IMR-90 (cell line): ENCODE measurements at regions of chr7 and their contacts with region 1.

Region 1: GRCh38 chr7:80134536-80135320 is at the start of gene GNAI1:
- DNase-seq: peak; percentile 74
- ATAC-seq: peak; percentile 85
- H3K4me3 ChIP-seq: peak within 1 kb of the TSS; percentile 98
- H3K27ac ChIP-seq: peak within 1 kb of the TSS; percentile 90
- H3K4me1 ChIP-seq: peaks cover 8% of the 10 kb centered on the region
- H3K27me3 ChIP-seq: no peaks in the 10 kb centered on the region
- CTCF ChIP-seq: peak; percentile 64
- POLR2A ChIP-seq: peak; percentile 66
- RAD21 ChIP-seq: peak; percentile 65
- total RNA-seq, gene GNAI1: 26.5 and 44.2 TPM in 2 replicates

Region 2: DNA sequence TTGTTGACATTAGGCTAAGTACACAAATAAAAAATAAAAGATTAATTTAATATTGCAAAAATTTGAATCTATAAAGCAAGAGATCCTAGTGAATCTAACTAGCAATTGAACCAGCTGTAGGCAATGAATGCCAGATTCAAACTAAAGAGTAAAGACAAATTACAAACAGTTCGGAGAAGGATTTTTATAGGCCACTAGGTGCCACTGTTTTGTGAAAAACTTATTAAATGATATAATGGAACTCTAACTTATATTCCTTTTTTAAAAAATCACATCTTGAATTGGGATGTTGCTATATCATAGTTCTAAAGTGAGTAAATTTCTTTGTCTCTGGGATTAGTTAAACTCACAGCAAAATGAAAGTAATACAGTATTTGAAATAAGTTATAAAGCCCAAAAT is 39.2 kb before region 1 on chr7:
- CTCF ChIA-PET with region 1: interaction called, 3 read pairs
- POLR2A ChIA-PET with region 1: no interaction called
- dilution Hi-C with region 1: no loop called
- in situ Hi-C with region 1: no loop called
- intact Hi-C with region 1: loop called (anchors 5 kb)
- DNase-seq: peak; percentile 29
- ATAC-seq: no peak; the same call in 1 of the 2 replicates
- H3K4me3 ChIP-seq: no peak overlapping the region
- H3K27ac ChIP-seq: no peak overlapping the region
- H3K4me1 ChIP-seq: no peaks in the 10 kb centered on the region; the same call in 1 of the 2 replicates
- H3K27me3 ChIP-seq: no peaks in the 10 kb centered on the region
- CTCF ChIP-seq: peak; percentile 56
- POLR2A ChIP-seq: no peak
- RAD21 ChIP-seq: peak; percentile 44

Region 3: DNA sequence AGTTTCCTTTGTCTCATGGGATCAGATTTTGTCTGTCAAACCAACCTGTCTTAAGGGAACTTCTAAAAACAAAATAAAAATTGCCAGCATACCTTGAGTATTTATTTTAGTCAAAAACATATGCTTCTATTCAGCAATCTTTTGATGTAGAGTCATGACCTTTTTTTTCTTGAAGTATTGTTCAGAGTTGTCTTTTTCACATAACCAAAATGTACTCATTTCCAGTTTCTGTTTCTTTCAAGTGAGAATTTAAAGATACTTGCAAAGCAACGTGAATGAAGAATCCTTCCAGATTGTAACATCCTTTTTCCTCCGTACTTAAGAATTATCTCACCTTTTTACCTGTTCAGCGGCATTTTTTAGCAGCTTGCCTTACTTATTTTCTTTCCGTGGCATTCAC is 37.7 kb after region 1 on chr7:
- CTCF ChIA-PET with region 1: no interaction called
- POLR2A ChIA-PET with region 1: no interaction called
- dilution Hi-C with region 1: no loop called
- in situ Hi-C with region 1: no loop called
- intact Hi-C with region 1: no loop called
- DNase-seq: no peak
- ATAC-seq: no peak
- H3K4me3 ChIP-seq: no peak overlapping the region
- H3K27ac ChIP-seq: no peak overlapping the region
- H3K4me1 ChIP-seq: no peaks in the 10 kb centered on the region
- H3K27me3 ChIP-seq: no peaks in the 10 kb centered on the region
- CTCF ChIP-seq: no peak
- POLR2A ChIP-seq: no peak
- RAD21 ChIP-seq: no peak

Region 4: GRCh38 chr7:80225361-80225760 is 90.6 kb after region 1 on chr7:
- CTCF ChIA-PET with region 1: no interaction called
- POLR2A ChIA-PET with region 1: no interaction called
- dilution Hi-C with region 1: no loop called
- in situ Hi-C with region 1: no loop called
- intact Hi-C with region 1: loop called (anchors 5 kb)
- DNase-seq: no peak
- ATAC-seq: no peak; the same call in 1 of the 2 replicates
- H3K4me3 ChIP-seq: no peak overlapping the region
- H3K27ac ChIP-seq: no peak overlapping the region
- H3K4me1 ChIP-seq: no peaks in the 10 kb centered on the region; the same call in 1 of the 2 replicates
- H3K27me3 ChIP-seq: no peaks in the 10 kb centered on the region
- CTCF ChIP-seq: no peak
- POLR2A ChIP-seq: no peak
- RAD21 ChIP-seq: no peak

Region 5: DNA sequence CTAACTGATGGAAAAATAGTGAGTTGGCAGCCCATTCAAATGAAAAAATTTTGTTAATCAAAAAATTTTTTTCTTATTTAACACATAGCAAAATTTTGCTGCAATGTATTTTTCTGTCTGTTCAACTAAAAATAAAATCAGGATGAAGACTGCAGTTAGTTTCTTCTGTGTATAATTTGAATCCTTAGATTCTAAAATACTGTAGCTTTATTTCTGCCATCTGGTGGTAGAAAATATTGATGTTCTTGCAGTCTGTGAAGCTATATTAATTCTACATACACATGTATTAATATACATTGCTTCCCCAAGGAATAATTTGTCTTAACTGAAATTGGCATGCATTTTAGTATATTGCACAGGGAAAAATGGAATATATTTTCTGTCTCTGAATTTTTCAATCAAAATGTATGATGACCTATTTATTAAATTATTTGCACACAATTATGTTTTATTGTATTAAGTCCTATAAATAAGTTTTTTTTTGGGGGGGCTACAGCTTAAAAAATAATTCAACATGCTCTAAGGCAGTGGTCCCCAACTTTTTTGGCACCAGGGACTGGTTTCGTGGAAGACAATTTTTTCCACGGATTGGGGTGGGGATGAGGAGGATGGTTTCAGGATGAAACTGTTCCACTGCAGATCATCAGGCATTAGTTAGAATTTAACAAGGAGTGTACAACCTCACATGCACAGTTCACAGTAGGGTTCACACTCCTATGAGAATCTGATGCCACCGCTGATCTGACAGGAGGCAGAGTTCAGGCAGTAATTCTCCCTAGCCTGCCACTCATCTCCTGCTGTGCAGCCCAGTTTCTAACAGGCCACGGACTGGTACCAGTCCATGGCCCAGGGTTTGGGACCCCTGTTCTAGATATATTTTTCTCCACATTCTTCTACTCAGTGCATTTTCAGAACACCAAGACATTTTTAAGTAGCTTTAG is 257.8 kb after region 1 on chr7:
- CTCF ChIA-PET with region 1: interaction called, 4 read pairs
- POLR2A ChIA-PET with region 1: no interaction called
- dilution Hi-C with region 1: no loop called
- in situ Hi-C with region 1: loop called (anchors 5 kb)
- intact Hi-C with region 1: loop called (anchors 1 kb)
- DNase-seq: peak; percentile 60
- ATAC-seq: peak; percentile 53; the same call in 1 of the 2 replicates
- H3K4me3 ChIP-seq: no peak overlapping the region
- H3K27ac ChIP-seq: no peak overlapping the region
- H3K4me1 ChIP-seq: no peaks in the 10 kb centered on the region
- H3K27me3 ChIP-seq: no peaks in the 10 kb centered on the region
- CTCF ChIP-seq: peak; percentile 59
- POLR2A ChIP-seq: no peak
- RAD21 ChIP-seq: peak; percentile 70

Region 6: DNA sequence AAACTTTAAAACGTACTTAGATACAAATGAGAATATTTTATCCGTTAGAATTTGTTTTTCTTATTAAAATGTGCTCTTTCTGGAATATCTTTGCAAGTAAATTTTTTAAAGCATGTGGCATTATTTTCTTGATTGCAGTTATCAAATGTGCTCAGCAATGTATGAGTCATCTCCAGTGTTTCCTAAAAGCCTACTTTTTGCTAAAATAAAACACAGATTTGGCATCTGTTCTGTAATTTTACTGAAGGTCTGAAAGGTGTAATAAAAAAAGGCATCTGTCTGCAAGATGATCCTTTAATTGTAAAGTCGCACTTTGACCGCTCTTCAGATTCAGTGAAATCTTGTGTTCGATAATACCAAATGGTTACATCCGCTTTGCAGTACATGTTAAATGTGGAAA is 373.7 kb after region 1 on chr7:
- CTCF ChIA-PET with region 1: no interaction called
- POLR2A ChIA-PET with region 1: no interaction called
- dilution Hi-C with region 1: no loop called
- in situ Hi-C with region 1: no loop called
- intact Hi-C with region 1: no loop called
- DNase-seq: peak; percentile 52
- ATAC-seq: no peak
- H3K4me3 ChIP-seq: no peak overlapping the region
- H3K27ac ChIP-seq: no peak overlapping the region
- H3K4me1 ChIP-seq: no peaks in the 10 kb centered on the region
- H3K27me3 ChIP-seq: no peaks in the 10 kb centered on the region
- CTCF ChIP-seq: no peak
- POLR2A ChIP-seq: no peak
- RAD21 ChIP-seq: no peak

Region 7: DNA sequence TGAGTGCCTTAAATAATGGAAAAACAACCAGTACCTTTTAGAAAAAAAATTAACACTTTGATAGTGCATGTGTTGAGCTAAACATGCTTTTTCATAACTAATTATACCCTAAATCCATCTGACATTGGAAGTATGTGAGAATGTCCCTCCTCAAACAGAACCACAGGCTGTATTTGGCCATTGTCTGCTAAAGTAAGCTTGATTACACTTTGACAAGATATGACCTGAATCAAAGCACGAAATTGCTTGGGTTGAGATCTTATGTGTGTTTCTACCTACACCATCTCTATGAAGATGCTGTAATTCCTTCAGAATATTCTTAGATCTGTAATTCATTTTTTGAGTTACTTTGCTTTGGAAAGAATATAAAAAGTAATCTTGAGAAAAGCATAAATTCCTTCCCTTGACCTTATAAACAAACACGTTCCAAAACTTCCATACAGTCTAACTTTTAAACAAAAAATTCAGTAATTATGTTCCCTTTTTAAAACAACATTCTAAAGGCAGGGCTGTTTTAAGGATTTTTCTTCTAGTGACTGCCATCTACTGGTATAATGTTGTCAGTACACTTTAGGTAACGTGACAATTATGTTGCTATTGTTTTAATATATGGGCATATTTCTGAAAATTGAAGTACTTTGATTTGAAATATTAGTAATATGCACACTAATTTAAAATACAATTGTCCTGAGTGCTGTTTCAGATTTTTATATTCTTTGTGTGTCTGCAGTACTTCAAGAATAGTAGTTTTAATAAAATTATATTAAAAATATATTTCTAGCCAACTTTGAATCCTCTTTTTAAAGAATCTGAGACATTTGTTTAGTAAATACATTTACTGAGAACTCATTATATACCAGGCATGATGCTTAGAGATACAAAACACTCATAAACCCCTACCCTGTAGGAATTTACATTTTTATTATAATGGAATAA is 524.7 kb after region 1 on chr7:
- CTCF ChIA-PET with region 1: no interaction called
- POLR2A ChIA-PET with region 1: no interaction called
- dilution Hi-C with region 1: no loop called
- in situ Hi-C with region 1: no loop called
- intact Hi-C with region 1: loop called (anchors 1 kb)
- DNase-seq: peak; percentile 62
- ATAC-seq: peak; percentile 90
- H3K4me3 ChIP-seq: no peak overlapping the region
- H3K27ac ChIP-seq: peak overlapping the region; percentile 11; the same call in 1 of the 2 replicates
- H3K4me1 ChIP-seq: peaks cover 2% of the 10 kb centered on the region
- H3K27me3 ChIP-seq: no peaks in the 10 kb centered on the region
- CTCF ChIP-seq: peak; percentile 74
- POLR2A ChIP-seq: no peak
- RAD21 ChIP-seq: peak; percentile 79